CD4-positive, alpha-beta memory T cell (primary cell): ENCODE measurements at regions of chr19 and their contacts with region 1.

Region 1: GRCh38 chr19:40974633-40975037 is 16.4 kb upstream of the CYP2B6 start:
- DNase-seq: peak; percentile 72 to 79 (median 73)
- H3K4me3 ChIP-seq: no peak overlapping the region
- H3K4me3 Mint-ChIP-seq: no peak overlapping the region
- H3K27ac ChIP-seq: no peak overlapping the region
- H3K27ac Mint-ChIP-seq: peak overlapping the region in 1 of 7 donors; percentile 9
- H3K4me1 ChIP-seq: peaks cover 22% of the 10 kb centered on the region
- H3K4me1 Mint-ChIP-seq: peaks cover 22 to 31% (median 26%) of the 10 kb centered on the region in 4 donors
- H3K27me3 ChIP-seq: no peaks in the 10 kb centered on the region
- H3K27me3 Mint-ChIP-seq: peaks cover 5 to 7% of the 10 kb centered on the region in 2 donors

Region 2: DNA sequence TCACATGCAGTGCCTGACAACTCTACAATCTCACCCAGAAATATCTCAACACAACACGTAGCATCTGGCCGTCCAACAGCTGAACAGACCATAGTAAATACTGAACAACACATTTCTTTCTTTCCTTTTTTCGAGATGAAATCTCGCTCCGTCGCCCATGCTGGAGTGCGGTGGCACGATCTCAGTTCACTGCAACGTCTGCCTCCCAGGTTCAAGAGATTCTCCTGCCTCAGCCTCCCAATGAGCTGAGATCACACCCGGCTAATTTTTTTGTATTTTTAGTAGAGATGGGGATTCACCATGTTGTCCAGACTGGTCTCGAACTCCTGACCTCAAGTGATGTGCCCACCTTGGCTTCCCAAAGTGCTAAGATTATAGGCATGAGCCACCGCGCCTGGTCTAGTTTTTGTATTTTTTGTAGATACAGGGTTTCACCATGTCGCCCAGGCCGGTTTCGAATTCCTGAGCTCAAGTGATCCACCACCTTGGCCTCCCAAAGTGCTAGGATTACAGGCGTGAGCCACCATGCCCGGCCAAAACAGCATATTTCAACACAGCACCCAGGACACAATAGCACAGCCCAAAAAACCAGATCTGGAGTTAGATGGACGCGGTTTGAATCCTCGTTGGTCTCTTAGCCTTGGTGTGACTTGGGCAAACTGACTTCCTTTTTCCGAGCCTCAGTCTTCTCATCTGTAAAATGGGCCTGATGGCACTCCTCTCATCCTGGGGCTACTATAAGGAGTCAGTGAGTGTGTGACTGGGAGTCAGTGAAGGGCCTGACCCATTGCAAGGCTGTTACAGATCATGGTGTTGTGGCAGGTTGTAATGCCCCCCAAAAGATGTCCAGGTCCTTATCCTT is 147.0 kb before region 1 on chr19:
- CTCF ChIA-PET with region 1: no interaction called
- POLR2A ChIA-PET with region 1: no interaction called
- intact Hi-C with region 1: loop called (anchors 2 kb)
- DNase-seq: no peak
- H3K4me3 ChIP-seq: no peak overlapping the region
- H3K4me3 Mint-ChIP-seq: peak overlapping the region in 6 of 8 donors; percentile 12 to 84 (median 72)
- H3K27ac ChIP-seq: peak overlapping the region; percentile 18
- H3K27ac Mint-ChIP-seq: peak overlapping the region; percentile 65 to 99 (median 97)
- H3K4me1 ChIP-seq: peaks cover 21% of the 10 kb centered on the region
- H3K4me1 Mint-ChIP-seq: peaks cover 14 to 48% (median 29%) of the 10 kb centered on the region in 4 donors
- H3K27me3 ChIP-seq: no peaks in the 10 kb centered on the region
- H3K27me3 Mint-ChIP-seq: no peaks in the 10 kb centered on the region

Region 3: DNA sequence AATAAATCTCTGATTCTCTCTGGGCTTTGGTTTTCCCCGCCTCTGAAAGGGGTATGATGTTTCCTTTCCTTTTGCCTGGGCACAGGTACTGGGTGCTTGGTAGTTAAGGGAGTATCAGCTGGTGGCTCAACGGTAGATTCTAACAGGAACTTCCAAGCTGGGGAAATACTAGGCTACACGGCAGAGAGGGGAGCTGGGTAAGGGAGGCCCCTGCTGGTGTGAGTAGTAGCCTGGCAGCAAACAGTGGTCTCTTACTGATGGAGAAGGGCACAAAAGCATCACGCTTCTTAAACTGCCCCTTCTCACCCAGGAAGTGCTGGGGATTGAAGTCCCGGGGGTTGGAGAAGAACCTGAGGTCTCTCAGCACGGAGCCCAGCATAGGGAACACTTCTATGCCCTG is 65.7 kb before region 1 on chr19:
- CTCF ChIA-PET with region 1: no interaction called
- POLR2A ChIA-PET with region 1: interaction called, 4 read pairs
- intact Hi-C with region 1: loop called (anchors 1 kb)
- DNase-seq: peak in 3 of 5 donors; percentile 39 to 52 (median 44)
- H3K4me3 ChIP-seq: peak overlapping the region in 1 of 2 donors; percentile 20
- H3K4me3 Mint-ChIP-seq: peak overlapping the region in 6 of 8 donors; percentile 81 to 89 (median 85)
- H3K27ac ChIP-seq: no peak overlapping the region
- H3K27ac Mint-ChIP-seq: peak overlapping the region in 3 of 7 donors; percentile 55 to 94 (median 79)
- H3K4me1 ChIP-seq: peaks cover 14% of the 10 kb centered on the region
- H3K4me1 Mint-ChIP-seq: peaks cover 10 to 18% (median 15%) of the 10 kb centered on the region in 4 donors
- H3K27me3 ChIP-seq: no peaks in the 10 kb centered on the region
- H3K27me3 Mint-ChIP-seq: peaks cover 12 to 18% of the 10 kb centered on the region in 2 donors

Region 4: DNA sequence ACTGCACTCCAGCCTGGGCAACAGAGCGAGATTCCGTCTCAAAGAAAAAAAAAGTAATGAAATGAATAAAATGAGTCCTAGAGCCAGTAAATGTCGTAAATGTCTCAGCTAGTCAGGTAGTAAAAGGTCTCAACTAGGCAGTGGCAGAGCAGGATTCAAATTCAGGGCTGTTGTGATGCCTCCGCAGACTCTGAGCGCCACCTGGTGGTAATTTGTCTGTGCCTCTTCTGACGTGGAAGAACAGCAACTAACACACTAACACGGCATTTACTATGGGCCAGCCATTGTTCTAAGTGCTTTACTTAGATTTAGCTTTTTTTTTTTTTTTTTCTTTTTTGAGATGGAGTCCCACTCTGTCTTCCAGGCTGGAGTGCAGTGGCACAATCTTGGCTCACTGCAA is 169.8 kb after region 1 on chr19:
- CTCF ChIA-PET with region 1: interaction called, 36 read pairs
- POLR2A ChIA-PET with region 1: interaction called, 7 read pairs
- intact Hi-C with region 1: loop called (anchors 1 kb)
- DNase-seq: peak; percentile 85 to 88 (median 86)
- H3K4me3 ChIP-seq: no peak overlapping the region
- H3K4me3 Mint-ChIP-seq: no peak overlapping the region
- H3K27ac ChIP-seq: no peak overlapping the region
- H3K27ac Mint-ChIP-seq: peak overlapping the region in 5 of 7 donors; percentile 39 to 84 (median 81)
- H3K4me1 ChIP-seq: no peaks in the 10 kb centered on the region
- H3K4me1 Mint-ChIP-seq: peaks cover 0 to 2% (median under 1%) of the 10 kb centered on the region in 4 donors
- H3K27me3 ChIP-seq: no peaks in the 10 kb centered on the region
- H3K27me3 Mint-ChIP-seq: peaks cover 6 to 11% of the 10 kb centered on the region in 2 donors